GM18951 (cell line): ENCODE measurements at regions of chr16 and their contacts with region 1.

Region 1: GRCh38 chr16:80824718-80825364 is 20.4 kb upstream of the CDYL2 start:
- POLR2A ChIP-seq: no peak

Region 2: DNA sequence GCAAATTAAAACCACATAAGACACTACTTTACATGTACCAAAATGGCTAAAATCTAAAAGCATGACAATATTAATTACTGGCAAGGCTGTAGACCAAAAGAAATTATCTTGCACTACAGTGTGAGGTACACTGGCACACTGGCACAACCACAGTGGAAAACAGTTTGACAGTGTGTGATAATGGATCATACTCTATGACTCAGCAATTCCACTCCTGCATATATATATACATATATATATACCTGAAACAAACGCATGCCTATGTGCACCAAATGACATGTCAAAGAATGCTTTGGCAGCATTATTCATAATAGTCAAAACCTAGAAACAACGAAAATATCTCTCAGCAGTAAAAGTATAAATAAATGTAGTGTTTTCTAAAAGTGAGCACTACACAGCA is 288.6 kb before region 1 on chr16:
- in situ Hi-C with region 1: loop called (anchors 10 kb)
- POLR2A ChIP-seq: no peak

Region 3: DNA sequence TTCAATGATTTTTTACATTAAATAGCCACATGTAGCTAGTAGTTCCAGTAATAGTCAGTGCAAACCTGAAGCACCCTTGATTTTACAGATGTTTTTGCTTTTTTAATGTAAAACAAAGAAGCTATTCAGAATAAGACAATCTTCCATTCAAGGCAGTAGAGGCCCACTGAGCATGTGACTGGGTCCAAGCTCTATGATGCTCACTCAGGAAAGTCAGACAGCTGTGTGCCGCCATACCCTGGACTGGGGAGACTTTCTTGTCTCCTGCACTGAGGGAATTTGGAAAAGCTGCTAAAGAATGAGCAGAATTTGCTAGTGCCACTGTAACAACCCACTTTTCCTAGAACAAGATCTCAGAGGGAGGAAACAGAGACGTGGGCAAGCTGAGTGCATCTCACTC is 193.7 kb after region 1 on chr16:
- in situ Hi-C with region 1: no loop called
- POLR2A ChIP-seq: no peak

Region 4: GRCh38 chr16:81314603-81315270 is 489.9 kb after region 1 on chr16 and contains the start of gene GAN:
- in situ Hi-C with region 1: no loop called
- POLR2A ChIP-seq: peak; percentile 90